Tibial artery (tissue), 4 donors: ENCODE measurements at regions of chr5 and their contacts with region 1.

Region 1: GRCh38 chr5:146965761-146966659 is 87.5 kb upstream of the PPP2R2B start:
- DNase-seq: peak; percentile 73 to 75
- H3K4me3 ChIP-seq: no peak overlapping the region
- H3K27ac ChIP-seq: no peak overlapping the region
- H3K4me1 ChIP-seq: peaks cover 0 to 31% (median 16%) of the 10 kb centered on the region in 4 donors
- H3K27me3 ChIP-seq: no peaks in the 10 kb centered on the region
- CTCF ChIP-seq: peak; percentile 77 to 91

Region 2: GRCh38 chr5:146541958-146542849 is 423.8 kb before region 1 on chr5:
- intact Hi-C with region 1: loop called (anchors 2 kb)
- DNase-seq: peak; percentile 67 to 83
- H3K4me3 ChIP-seq: no peak overlapping the region
- H3K27ac ChIP-seq: no peak overlapping the region
- H3K4me1 ChIP-seq: peaks cover 0 to 6% (median 2%) of the 10 kb centered on the region in 4 donors
- H3K27me3 ChIP-seq: no peaks in the 10 kb centered on the region
- CTCF ChIP-seq: peak; percentile 80 to 87

Region 3: GRCh38 chr5:146548781-146549449 is 417.1 kb before region 1 on chr5:
- intact Hi-C with region 1: loop called (anchors 2 kb)
- DNase-seq: no peak
- H3K4me3 ChIP-seq: no peak overlapping the region
- H3K27ac ChIP-seq: no peak overlapping the region
- H3K4me1 ChIP-seq: no peaks in the 10 kb centered on the region
- H3K27me3 ChIP-seq: no peaks in the 10 kb centered on the region
- CTCF ChIP-seq: no peak

Region 4: DNA sequence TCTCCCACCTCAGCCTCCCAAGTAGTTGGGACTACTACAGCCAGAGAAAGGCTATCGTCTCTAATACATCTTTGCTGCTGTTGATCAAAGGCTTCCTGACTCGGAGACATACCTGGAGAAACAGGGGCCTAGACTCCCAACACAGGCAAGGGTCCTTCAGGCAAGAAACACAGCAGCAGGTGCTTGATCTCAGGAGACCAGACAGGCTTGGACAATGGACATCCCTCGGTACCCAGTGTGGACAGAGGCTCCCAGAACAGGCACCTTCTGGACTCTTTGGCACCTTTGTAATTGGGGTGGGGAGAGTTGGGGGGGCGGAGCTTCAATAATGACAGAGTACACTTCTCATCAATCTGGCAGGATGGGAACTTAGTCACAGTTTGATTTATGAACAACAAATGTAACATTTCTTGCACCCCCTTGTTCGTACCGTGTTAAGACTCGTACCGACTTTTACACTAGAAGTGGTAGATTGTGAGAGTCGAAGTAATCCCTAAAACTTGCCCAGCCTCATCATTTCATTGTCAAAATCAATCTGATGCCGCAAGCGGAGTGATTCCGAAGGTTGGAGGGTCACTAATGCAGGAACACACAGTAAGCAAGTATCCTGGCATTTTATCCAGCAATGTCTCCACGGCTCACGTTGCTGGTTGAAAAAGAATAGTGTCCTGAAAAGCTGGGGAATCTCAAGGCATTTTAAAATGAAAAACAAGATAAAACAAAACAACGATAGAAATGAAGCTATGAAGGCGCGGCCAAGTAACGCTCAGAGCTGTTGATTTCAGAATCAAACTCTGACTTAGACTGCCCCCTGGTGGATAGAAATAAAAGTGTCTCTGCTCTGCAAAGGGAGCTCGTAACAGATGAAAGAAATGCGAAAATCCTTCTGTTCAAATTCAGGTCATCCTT is 222.4 kb after region 1 on chr5:
- intact Hi-C with region 1: loop called (anchors 10 kb)
- DNase-seq: peak in 1 of 2 donors; percentile 48
- H3K4me3 ChIP-seq: no peak overlapping the region
- H3K27ac ChIP-seq: no peak overlapping the region
- H3K4me1 ChIP-seq: no peaks in the 10 kb centered on the region
- H3K27me3 ChIP-seq: no peaks in the 10 kb centered on the region
- CTCF ChIP-seq: peak; percentile 85 to 88